ENCODE measurements at regions of chr11 and their contacts with region 1.

Region 1: DNA sequence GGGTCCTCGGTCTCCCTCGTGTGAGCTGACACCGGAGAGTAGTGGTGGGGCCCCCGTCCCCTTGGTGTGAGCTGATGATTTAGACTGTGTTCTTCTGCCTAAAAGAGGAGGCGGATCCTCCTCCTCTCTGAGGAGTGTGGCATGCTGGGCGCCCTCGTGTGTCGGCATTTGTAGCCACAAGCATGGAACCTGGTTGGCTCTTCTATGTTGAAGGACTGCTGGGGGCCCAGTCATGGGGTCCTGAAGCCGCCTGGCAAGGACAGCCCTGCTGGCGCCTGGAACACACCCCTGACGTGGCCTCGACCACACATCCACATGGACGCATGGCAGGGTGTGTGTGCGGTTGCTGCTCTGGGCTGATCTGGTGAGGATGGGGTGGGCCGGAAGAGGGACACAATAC is 50.2 kb downstream of the AP2A2 start:
- DNase-seq: peak in 6 of 10 donors; percentile 61 to 93 (median 84)

Region 2: GRCh38 chr11:842370-843002 is 133.3 kb before region 1 on chr11 and contains the starts of genes POLR2L and TSPAN4:
- intact Hi-C with region 1: loop called (anchors 10 kb)
- DNase-seq: peak; percentile 77 to 98 (median 88)

Region 3: DNA sequence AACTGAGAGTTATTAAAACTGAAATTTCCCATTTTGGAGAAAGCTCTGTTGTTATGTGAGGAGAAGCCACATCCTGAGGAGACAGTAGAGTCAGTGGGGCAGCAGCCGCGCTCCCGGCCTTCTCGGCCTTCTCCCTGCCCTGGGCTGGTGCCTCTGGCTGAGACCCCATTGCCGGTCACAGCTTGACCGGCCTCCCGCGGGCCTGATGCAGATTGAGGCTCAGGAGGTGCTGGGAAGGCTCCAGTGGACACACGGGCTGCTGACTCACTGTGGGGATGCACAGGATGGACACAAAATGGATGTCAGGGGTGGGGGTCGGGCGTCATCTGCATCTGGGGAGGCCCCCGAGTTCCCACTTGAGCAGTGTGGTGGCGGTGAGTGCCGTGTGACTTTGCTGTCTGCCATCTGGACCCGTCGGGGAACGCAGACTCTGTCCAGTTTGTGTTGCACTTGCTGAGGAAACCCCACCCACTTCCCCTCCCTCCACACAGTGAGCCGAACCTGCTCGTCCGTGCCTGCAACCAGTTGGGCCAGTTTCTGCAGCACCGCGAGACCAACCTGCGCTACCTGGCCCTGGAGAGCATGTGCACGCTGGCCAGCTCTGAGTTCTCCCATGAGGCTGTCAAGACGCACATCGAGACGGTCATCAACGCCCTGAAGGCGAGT is 10.6 kb after region 1 on chr11:
- intact Hi-C with region 1: no loop called
- DNase-seq: no peak